Posterior cingulate gyrus (tissue), 11 donors: ENCODE measurements at regions of chr6 and their contacts with region 1.

Region 1: GRCh38 chr6:70221025-70221714 is 81.7 kb downstream of the COL9A1 start:
- DNase-seq: peak in 1 of 10 donors; percentile 67

Region 2: GRCh38 chr6:69894578-69895347 is 326.4 kb before region 1 on chr6:
- intact Hi-C with region 1: no loop called
- DNase-seq: no peak

Region 3: DNA sequence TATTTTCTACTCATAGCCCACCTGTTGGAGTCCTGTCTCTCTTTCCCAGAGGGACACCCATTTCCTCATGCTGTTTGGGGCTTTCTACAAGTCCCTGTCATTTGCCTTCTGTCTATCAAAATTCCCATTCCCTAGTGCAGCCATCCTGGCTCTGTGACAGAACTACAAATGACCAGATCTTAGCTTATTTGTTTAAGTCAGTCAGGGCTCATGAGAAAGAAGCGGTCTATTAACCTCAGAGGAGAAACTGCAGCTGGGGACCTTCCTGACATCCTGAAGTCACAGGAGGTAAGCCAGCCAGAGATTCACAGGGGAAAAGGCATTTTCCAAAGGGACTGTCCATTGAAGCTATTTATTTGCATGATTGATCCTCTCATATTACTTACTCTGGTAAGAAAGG is 83.4 kb after region 1 on chr6:
- intact Hi-C with region 1: loop called (anchors 5 kb)
- DNase-seq: no peak

Region 4: GRCh38 chr6:70369332-70369950 is 148.3 kb after region 1 on chr6:
- intact Hi-C with region 1: loop called (anchors 1 kb)
- DNase-seq: peak; percentile 30 to 95 (median 72)